Activated CD8-positive, alpha-beta T cell treated with anti-CD3 and anti-CD28 coated beads, Interleukin-2, amount 10 ng/mL, durations not matched to agents 7 days and 5 days (primary cell): ENCODE measurements at regions of chr3 and their contacts with region 1.

Region 1: GRCh38 chr3:132641837-132642538 is 17.6 kb downstream of the ACAD11 start:
- DNase-seq: no peak
- ATAC-seq: peak; percentile 42
- H3K4me3 Mint-ChIP-seq: no peak overlapping the region
- H3K27ac Mint-ChIP-seq: no peak overlapping the region
- H3K4me1 Mint-ChIP-seq: peaks cover 10% of the 10 kb centered on the region
- H3K27me3 Mint-ChIP-seq: no peaks in the 10 kb centered on the region

Region 2: GRCh38 chr3:132507657-132508056 is 134.3 kb before region 1 on chr3:
- CTCF ChIA-PET with region 1: interaction called, 10 read pairs
- POLR2A ChIA-PET with region 1: no interaction called
- DNase-seq: no peak
- ATAC-seq: no peak
- H3K4me3 Mint-ChIP-seq: no peak overlapping the region
- H3K27ac Mint-ChIP-seq: no peak overlapping the region
- H3K4me1 Mint-ChIP-seq: peaks cover 2% of the 10 kb centered on the region
- H3K27me3 Mint-ChIP-seq: no peaks in the 10 kb centered on the region

Region 3: DNA sequence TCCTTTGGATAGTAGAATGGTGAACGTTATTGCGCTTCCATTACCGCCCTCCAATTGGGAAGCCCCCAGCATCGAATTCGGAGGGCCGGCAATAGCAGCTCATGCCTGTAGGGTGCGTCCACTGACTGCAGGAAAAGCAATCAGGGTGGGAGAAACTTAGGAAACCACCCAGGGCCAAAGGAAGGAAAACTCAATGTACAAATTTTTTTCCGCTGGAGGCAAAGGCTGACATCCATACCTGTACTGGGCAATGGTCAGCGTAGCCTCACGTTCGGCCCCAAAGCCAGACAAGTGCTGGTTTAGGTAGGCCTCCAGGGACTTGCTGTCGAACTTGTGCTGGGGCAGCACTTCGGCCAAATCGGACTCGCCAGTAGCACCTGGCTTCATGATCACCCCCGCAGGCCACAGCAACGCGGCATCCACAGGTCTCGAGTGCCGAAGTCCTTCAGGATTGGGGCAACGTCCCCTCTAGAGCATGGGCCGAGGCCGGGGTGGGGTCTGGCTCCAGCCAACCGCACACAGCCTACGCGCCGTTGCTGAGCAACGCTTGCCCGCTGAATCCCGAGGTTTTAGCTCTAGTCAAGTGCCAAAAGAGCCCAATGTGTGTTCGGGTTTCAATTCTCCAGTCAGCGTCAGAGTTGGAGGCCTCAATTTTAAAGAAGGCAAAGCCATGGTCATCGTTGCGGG is 17.5 kb after region 1 on chr3 and contains the start of gene ACAD11:
- CTCF ChIA-PET with region 1: interaction called, 18 read pairs
- POLR2A ChIA-PET with region 1: interaction called, 3 read pairs
- DNase-seq: peak; percentile 46
- ATAC-seq: peak; percentile 49
- H3K4me3 Mint-ChIP-seq: peak within 1 kb of the TSS; percentile 95
- H3K27ac Mint-ChIP-seq: peak within 1 kb of the TSS; percentile 99
- H3K4me1 Mint-ChIP-seq: peaks cover 38% of the 10 kb centered on the region
- H3K27me3 Mint-ChIP-seq: no peaks in the 10 kb centered on the region
- total RNA-seq, gene ACAD11: 11.3 to 13.7 TPM

Region 4: GRCh38 chr3:132788301-132788671 is 146.3 kb after region 1 on chr3:
- CTCF ChIA-PET with region 1: no interaction called
- POLR2A ChIA-PET with region 1: no interaction called
- DNase-seq: no peak
- ATAC-seq: no peak
- H3K4me3 Mint-ChIP-seq: no peak overlapping the region
- H3K27ac Mint-ChIP-seq: no peak overlapping the region
- H3K4me1 Mint-ChIP-seq: no peaks in the 10 kb centered on the region
- H3K27me3 Mint-ChIP-seq: peaks cover 2% of the 10 kb centered on the region